ENCODE measurements at regions of chr11 and their contacts with region 1.

Region 1: GRCh38 chr11:123511037-123511870 is 81.2 kb downstream of the GRAMD1B start:
- DNase-seq: peak; percentile 63 to 90 (median 81)
- ATAC-seq: peak; percentile 99
- H3K4me3 ChIP-seq: no peak overlapping the region
- H3K27ac ChIP-seq: no peak overlapping the region
- H3K4me1 ChIP-seq: no peaks in the 10 kb centered on the region
- H3K27me3 ChIP-seq: peaks cover 0 to 9% of the 10 kb centered on the region in 2 donors
- CTCF ChIP-seq: peak; percentile 75 to 89

Region 2: DNA sequence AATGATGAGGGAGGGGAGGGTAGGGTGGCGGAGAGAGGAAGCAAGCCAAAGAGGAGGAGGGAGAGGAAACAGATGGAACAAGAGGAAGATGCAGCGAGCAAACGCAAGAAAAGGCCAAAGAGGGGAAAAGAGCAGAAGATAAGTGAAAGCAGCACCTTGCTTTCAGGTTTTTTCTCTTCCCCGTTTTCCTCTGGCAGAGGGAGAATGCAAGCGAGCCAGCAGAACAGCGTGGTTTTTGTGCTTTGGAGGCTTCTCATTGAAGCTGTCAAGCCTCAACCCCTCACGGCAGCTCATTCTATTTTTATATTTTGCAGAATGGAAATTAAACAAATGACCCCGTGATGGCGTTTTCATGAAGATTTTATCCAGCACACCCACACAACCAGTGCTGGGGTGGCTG is 148.3 kb before region 1 on chr11:
- intact Hi-C with region 1: no loop called
- DNase-seq: no peak
- ATAC-seq: no peak
- H3K4me3 ChIP-seq: no peak overlapping the region
- H3K27ac ChIP-seq: no peak overlapping the region
- H3K4me1 ChIP-seq: no peaks in the 10 kb centered on the region
- H3K27me3 ChIP-seq: peaks cover 19 to 53% of the 10 kb centered on the region in 2 donors
- CTCF ChIP-seq: no peak

Region 3: GRCh38 chr11:123580557-123581275 is 69.5 kb after region 1 on chr11:
- intact Hi-C with region 1: loop called in 1 of 2 experiments (anchors 5 kb)
- DNase-seq: peak in 3 of 4 donors; percentile 62 to 93 (median 69)
- ATAC-seq: peak; percentile 96
- H3K4me3 ChIP-seq: no peak overlapping the region
- H3K27ac ChIP-seq: no peak overlapping the region
- H3K4me1 ChIP-seq: peaks cover 0 to 7% of the 10 kb centered on the region in 2 donors
- H3K27me3 ChIP-seq: peaks cover 0 to 19% of the 10 kb centered on the region in 2 donors
- CTCF ChIP-seq: peak; percentile 90 to 96